ENCODE measurements at regions of chr20 and their contacts with region 1.

Region 1: DNA sequence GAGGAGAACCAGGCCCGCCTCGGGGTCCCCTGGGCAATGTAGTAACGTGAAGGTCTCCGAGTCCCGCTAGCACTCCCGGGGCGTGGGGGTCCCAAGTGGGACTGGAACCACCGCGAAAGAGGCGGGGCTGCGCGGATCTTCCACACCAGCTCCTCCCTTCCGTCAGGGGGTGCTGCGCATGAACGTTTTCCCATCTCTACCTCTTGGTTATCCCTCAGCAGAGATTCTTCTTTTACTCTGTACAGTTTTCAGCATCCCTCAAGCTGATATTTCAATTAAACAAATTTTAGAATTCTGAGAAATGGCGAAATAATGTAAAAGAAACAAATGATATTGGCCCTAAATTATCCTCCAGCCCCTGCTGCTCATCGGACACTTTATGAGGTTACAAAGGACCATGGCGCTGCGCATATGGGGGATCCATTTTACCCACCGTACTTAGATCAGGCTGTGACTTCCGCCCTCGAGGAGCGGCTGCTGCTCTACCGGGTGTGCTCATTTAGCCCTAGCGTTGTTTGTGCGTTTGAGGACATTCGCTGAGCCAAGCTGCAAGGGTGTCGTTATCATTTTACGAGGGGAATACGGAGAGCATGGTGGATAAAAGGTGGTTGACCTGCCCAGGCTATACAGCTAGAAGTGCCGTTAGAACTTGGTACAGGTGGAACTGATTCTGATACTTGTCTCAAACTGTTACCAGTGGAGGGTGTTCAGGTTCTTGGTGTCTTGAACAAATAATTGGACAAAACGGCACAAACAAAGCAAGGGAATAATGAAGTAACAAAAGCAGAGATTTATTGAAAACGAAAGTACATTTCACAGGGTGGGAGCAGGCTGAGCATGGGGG is 75.2 kb upstream of the CHD6 start:
- DNase-seq: peak; percentile 74
- ATAC-seq: peak; percentile 76
- H3K4me3 Mint-ChIP-seq: peak overlapping the region; percentile 94
- H3K27ac Mint-ChIP-seq: peak overlapping the region; percentile 98
- H3K4me1 Mint-ChIP-seq: peaks cover 35% of the 10 kb centered on the region
- H3K27me3 Mint-ChIP-seq: peaks cover 2% of the 10 kb centered on the region; the same call in 1 of the 2 replicates
- CTCF ChIP-seq: no peak

Region 2: GRCh38 chr20:41572010-41572560 is 121.3 kb before region 1 on chr20:
- CTCF ChIA-PET with region 1: interaction called, 11 read pairs
- POLR2A ChIA-PET with region 1: interaction called, 5 read pairs
- DNase-seq: peak; percentile 38
- ATAC-seq: peak; percentile 65
- H3K4me3 Mint-ChIP-seq: no peak overlapping the region
- H3K27ac Mint-ChIP-seq: no peak overlapping the region
- H3K4me1 Mint-ChIP-seq: peaks cover 49% of the 10 kb centered on the region
- H3K27me3 Mint-ChIP-seq: no peaks in the 10 kb centered on the region
- CTCF ChIP-seq: 0 out of 2 replicates have a peak, but pooled peaks have one; percentile 28

Region 3: GRCh38 chr20:41617931-41618806 is 75.2 kb before region 1 on chr20 and contains the start of gene CHD6:
- CTCF ChIA-PET with region 1: interaction called, 12 read pairs
- POLR2A ChIA-PET with region 1: interaction called, 13 read pairs
- DNase-seq: peak; percentile 100
- ATAC-seq: peak; percentile 97
- H3K4me3 Mint-ChIP-seq: peak within 1 kb of the TSS; percentile 94
- H3K27ac Mint-ChIP-seq: peak within 1 kb of the TSS; percentile 91
- H3K4me1 Mint-ChIP-seq: peaks cover 51% of the 10 kb centered on the region
- H3K27me3 Mint-ChIP-seq: no peaks in the 10 kb centered on the region
- CTCF ChIP-seq: no peak
- total RNA-seq, gene CHD6: 52.1 to 61.9 TPM (median 52.8 TPM) in 3 replicates

Measured in WTC11 (cell line).